ENCODE measurements at regions of chr12 and their contacts with region 1.

Region 1: GRCh38 chr12:69570545-69571399 is 14.5 kb upstream of the CCT2 start:
- DNase-seq: peak; percentile 60 to 62
- H3K4me3 ChIP-seq: no peak overlapping the region
- H3K27ac ChIP-seq: no peak overlapping the region
- H3K4me1 ChIP-seq: no peaks in the 10 kb centered on the region
- H3K27me3 ChIP-seq: no peaks in the 10 kb centered on the region
- CTCF ChIP-seq: peak; percentile 32 to 86 (median 74)
- POLR2A ChIP-seq: no peak

Region 2: DNA sequence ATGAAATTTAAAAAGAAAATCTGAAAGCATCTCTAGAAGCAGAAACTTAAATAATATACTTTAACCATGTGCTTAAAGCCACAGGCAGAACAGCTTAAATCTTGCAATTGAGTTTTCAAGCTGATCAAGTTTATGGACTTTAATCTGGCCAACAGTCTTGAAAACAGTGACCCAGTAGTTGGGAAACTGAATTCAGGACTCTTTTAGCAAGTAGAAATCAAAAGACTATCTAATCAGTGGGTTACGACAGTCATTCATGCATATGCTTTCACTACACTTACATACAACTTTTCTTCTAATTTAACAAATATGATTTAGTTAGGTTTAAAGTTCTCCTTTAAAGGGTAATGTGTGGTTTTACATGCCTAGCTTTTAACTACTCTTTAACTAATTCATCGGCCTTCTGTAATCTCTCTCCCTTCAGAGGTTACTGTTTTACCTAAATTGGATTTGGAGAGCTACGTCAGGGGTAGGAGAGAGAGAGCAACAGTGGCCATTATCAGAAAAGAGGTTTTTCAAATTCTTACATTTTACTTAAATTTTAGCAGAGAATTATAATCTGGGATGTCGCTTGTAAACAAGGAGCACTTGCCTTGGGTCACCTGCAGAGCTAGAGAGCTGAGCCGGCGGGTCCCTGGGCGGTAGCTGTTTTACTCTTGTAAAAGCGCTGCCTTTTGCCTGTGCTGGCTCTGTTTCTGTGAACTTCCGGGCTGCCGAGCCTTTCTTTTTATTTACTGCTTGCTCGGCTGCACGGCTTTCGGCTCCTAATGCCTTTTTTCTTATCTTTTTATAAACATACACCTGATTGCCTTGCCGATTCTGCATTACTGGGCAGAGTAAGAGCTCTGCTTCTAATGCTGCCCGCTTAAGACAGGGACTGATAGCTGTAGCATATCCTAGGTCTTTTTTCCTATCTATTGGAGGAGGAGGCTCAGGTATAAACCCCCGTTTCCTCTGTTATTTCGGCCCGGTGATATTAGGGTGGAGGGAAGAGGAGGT is 240.0 kb before region 1 on chr12:
- intact Hi-C with region 1: no loop called
- DNase-seq: peak; percentile 39 to 59
- H3K4me3 ChIP-seq: peak overlapping the region in 2 of 3 donors; percentile 6 to 25
- H3K27ac ChIP-seq: peak overlapping the region in 1 of 3 donors; percentile 12
- H3K4me1 ChIP-seq: peaks cover 0 to 8% of the 10 kb centered on the region in 2 donors
- H3K27me3 ChIP-seq: no peaks in the 10 kb centered on the region
- CTCF ChIP-seq: no peak
- POLR2A ChIP-seq: no peak

Region 3: DNA sequence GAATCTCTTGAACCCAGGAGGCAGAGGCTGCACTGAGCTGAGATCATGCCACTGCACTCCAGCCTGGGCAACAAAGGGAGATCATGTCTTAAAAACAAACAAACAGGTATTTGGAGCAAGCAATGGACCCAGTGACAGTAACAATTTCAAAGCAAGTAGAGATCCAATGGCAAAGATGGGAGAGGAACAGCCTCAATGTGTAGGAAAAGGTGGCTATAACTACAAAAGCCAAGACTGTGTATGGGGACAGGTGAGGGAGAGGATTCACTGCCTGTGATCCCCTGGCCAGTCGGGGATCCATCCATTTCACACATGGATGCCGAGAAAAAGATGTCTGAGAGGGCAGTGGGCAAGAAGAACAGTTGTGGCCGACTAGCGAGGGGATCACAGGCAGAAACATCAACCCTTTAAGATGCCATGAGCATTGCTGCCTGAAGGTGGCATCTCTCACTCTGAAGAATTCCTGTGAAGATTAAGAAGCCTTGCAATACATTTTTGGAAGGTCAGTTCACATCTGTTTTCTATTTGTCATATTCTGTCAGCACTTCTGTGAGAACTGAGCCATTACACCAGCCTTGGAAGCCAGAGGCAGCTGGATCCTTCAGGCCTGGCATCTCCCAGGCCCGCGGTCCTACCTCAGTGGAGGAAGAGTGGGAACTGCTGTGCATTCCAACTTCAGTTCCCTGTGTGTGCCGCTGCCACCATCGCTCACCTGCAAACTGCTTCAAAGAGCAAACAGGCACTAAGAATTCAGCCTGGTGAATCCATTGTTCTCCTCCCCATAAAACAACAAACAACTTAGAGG is 155.1 kb before region 1 on chr12:
- intact Hi-C with region 1: loop called (anchors 5 kb)
- DNase-seq: peak; percentile 58 to 61
- H3K4me3 ChIP-seq: no peak overlapping the region
- H3K27ac ChIP-seq: peak overlapping the region in 1 of 3 donors; percentile 49
- H3K4me1 ChIP-seq: peaks cover 0 to 13% of the 10 kb centered on the region in 2 donors
- H3K27me3 ChIP-seq: no peaks in the 10 kb centered on the region
- CTCF ChIP-seq: peak; percentile 13 to 87 (median 73)
- POLR2A ChIP-seq: no peak

Region 4: DNA sequence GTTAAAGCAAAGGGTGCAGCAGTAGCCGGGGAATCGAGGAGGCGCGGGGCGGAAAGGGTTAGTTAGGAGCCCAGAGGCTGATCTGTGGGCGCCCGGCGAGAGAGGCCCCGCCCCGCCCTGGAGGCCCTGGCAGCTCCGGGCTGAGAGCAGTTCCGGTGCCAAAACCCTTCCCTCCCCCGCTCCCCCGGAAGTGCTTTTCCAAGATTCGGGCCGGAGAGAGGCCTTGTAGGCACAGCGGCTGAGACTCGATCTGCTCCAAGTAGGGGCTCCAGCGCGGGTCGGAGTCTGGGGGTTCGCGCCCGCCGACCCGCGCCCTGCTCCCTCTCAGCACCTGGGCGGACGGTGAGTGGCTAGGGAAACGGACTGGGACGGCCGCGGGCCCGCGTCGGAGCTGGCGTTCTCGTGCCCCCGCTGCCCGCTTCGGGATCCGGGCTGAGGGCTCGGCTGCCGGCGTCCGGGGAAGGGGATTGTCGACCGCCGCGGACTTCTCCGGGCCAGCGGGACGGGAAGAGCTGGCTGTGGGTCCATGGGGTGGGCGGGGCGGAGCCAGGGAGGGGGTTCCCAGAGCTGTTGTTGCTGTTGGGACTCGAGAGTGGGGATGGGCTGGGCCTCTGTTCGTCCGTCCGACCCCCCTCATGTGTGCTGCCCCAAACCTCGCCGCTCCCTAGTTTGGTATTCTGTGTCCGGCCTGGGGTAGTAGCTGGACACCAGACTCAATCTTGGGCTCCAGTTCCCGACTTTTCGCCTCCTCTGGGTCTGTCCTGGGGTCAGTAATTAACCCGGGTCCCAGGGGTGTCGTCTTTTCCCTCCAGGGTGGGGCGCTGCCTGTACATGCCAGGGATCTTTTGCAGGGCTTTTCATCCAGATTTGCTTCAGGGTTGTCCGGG is 100.3 kb before region 1 on chr12 and contains the start of gene FRS2:
- intact Hi-C with region 1: loop called (anchors 2 kb)
- DNase-seq: peak; percentile 91
- H3K4me3 ChIP-seq: peak within 1 kb of the TSS; percentile 71 to 95 (median 78)
- H3K27ac ChIP-seq: peak within 1 kb of the TSS; percentile 82 to 95 (median 82)
- H3K4me1 ChIP-seq: peaks cover 20 to 47% of the 10 kb centered on the region in 2 donors
- H3K27me3 ChIP-seq: no peaks in the 10 kb centered on the region
- CTCF ChIP-seq: peak in 3 of 6 experiments; percentile 34 to 40 (median 36)
- POLR2A ChIP-seq: peak in 1 of 2 donors; percentile 80
- total RNA-seq, gene FRS2: 52.0 to 79.0 (median 61.0) TPM

Measured in thyroid gland (tissue), 4 donors.